ENCODE measurements at regions of chr19 and their contacts with region 1.

Region 1: DNA sequence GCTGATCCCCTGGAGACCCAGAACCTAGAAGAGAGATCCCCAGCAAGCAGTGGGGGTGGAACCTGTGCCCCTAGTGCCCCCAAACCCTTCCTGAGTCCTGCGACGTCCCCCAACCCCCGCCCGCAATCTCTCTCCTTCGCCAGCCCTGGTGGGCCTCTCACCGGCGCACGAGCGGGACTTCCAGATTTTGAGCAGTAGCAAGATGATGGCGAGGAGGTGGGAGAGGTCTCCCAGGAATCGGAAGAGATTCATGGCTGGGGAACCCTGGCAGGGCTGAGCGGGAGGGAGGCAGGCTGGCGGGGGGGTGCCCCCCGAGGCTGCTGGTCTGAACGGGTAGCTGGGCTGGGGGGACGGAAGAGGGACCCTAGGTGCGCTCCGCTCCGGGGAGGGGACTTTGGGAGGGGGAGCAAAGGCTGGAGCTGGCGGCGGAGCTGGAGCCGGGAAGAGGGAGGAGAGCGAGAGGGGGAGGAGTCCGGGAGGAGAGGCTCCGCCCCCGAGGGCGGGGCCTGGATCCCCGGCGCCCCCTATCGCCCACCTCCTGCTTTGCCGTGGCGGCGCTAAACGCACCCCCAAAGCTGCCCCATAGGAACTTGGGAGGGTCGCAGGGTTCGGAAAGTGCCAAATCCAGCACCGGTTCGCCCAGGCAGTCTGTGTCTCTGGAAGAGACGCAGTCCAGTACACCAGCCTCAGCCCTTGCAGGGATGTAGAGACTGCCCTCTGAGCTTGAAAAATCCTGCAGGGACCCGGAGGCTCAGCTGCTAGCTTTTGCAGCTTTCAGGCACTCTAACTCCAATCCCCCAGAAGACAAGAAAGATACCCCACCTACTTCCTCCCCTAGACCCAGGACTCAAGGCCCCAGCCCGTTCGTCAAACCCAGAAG is at the start of gene KDELR1:
- DNase-seq: peak; percentile 89
- ATAC-seq: peak; percentile 96
- total RNA-seq, gene KDELR1: 104 TPM

Region 2: GRCh38 chr19:48480183-48480557 is 88.8 kb after region 1 on chr19:
- intact Hi-C with region 1: no loop called
- DNase-seq: peak; percentile 77
- ATAC-seq: peak; percentile 83

Region 3: GRCh38 chr19:48588670-48589399 is 197.5 kb after region 1 on chr19:
- intact Hi-C with region 1: loop called (anchors 10 kb)
- DNase-seq: peak; percentile 95
- ATAC-seq: peak; percentile 85

Region 4: DNA sequence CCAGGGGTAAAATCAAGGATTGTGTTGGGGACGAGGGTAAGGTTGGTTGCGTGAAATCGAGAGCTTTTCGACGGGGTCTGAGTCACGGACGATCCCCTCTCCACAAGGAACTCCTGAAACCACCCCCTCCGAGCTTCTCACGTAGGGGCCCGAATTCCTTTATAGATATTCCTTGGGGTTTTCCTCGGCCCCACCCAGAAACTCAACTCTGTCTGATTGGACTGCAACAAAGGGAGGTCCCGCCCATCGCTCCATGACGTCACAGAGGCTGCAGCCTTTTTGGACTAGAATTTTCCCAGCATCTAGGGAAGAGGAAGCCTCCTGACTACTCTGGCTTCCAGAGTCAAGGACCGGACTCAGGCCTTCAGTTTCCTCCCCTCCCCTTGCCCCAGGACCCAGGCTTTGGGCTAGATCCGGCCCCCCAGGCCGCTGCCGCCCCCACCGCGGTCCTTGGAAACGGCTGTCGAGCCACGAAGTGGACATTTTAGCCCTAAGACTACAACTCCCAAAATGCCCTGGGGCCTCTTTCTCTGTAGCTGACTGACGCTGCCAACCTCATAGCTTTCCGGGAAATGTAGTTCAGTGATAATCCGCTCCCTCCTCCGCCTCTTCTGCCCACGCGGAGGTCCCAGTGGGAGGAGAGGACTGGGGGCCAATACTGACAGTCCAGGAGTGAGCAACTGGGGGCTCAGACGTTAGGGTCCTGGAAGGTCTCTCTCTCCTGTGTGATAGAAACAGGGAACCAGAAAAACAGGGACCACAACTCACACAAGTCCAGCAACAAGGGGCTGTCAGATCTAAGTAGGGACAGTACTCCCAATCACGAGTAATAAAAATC is 355.6 kb after region 1 on chr19 and contains the start of gene IZUMO1:
- intact Hi-C with region 1: no loop called
- DNase-seq: peak; percentile 83
- ATAC-seq: peak; percentile 88
- total RNA-seq, gene IZUMO1: 0.27 TPM

Measured in sciatic nerve (tissue), 2 donors.